ENCODE measurements at regions of chr11 and their contacts with region 1.

Region 1: DNA sequence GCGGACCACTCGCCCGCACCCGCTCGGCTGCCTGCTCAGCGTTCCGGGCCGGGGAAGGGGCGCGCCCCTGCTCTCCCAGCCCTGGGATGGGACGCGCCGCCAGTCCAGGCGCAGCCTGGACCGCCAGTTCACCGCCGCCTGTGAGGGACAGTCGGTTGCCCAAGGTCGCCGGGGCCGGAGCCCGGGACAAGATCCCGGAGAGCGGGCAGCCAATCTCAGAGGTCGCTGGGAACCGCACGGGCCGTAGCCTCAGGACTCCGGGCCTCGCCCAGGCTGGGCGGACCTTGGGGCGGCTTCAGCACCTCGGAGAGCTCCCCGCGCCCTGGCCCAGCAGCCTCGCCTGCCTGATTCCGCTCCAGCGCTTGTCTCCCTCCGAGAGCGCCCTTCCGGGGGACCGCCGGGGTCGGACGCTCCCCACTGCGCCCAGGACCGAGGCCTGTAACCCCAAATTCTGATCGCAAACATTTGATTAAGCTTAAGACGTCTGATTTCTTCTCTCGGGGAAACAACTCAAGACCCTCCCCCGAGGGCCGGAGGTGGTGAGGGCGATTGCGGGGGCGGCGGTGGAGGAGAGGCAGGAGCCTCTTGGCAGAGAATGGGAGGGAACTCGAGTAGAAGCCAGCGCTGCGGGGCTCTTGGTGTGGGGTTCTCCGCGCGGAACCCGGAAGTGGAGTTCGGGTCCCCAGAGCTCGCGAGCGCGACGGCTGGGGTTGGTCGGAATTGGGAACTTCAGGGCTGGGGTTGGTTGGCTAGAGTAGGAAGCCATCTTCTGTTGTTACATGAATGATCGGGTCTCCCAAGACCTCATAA is 1.1 kb upstream of the CHRM4 start:
- DNase-seq: peak; percentile 74
- ATAC-seq: peak; percentile 90
- H3K4me3 Mint-ChIP-seq: peak overlapping the region; percentile 70
- H3K27ac Mint-ChIP-seq: peak overlapping the region; percentile 35
- H3K4me1 Mint-ChIP-seq: peaks cover 24% of the 10 kb centered on the region
- H3K27me3 Mint-ChIP-seq: peaks cover 25% of the 10 kb centered on the region
- CTCF ChIP-seq: no peak

Region 2: DNA sequence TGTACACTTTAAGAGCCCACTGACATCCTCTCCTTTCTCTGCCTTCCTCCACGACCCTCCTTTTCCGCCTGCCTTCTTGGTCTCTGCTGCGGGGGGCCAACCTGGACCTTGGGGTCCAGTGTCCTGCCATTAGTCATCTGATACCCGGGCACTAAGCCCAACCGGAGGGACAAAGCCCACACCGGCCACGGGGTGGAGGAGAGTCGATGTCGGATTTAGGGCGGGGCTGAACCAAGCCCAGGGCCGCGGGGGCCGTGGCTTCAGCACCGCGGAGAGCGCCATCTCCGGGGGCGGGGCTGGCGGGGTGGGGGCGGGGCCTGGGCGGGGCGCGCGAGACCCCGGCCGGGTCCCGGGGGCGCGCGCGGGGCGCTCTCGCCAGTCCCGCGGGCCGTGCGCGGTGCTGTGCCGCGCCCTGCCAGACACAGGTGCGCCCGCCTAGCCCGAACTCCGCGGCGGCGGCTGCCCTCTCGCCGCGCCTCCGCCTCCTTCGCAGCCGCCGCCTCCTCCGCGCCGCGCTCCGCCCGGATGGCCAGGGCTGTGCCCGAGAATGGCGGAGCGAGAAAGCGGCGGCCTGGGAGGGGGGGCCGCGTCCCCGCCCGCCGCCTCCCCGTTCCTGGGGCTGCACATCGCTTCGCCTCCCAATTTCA is 507.2 kb before region 1 on chr11 and contains the start of gene MAPK8IP1:
- CTCF ChIA-PET with region 1: no interaction called
- POLR2A ChIA-PET with region 1: no interaction called
- intact Hi-C with region 1: loop called (anchors 2 kb)
- DNase-seq: peak; percentile 61
- ATAC-seq: peak; percentile 88
- H3K4me3 Mint-ChIP-seq: peak within 1 kb of the TSS; percentile 80
- H3K27ac Mint-ChIP-seq: no peak within 1 kb of the TSS
- H3K4me1 Mint-ChIP-seq: peaks cover 10% of the 10 kb centered on the region
- H3K27me3 Mint-ChIP-seq: no peaks in the 10 kb centered on the region
- CTCF ChIP-seq: no peak
- total RNA-seq, gene MAPK8IP1: 1.9 and 3.4 TPM in 2 replicates

Region 3: DNA sequence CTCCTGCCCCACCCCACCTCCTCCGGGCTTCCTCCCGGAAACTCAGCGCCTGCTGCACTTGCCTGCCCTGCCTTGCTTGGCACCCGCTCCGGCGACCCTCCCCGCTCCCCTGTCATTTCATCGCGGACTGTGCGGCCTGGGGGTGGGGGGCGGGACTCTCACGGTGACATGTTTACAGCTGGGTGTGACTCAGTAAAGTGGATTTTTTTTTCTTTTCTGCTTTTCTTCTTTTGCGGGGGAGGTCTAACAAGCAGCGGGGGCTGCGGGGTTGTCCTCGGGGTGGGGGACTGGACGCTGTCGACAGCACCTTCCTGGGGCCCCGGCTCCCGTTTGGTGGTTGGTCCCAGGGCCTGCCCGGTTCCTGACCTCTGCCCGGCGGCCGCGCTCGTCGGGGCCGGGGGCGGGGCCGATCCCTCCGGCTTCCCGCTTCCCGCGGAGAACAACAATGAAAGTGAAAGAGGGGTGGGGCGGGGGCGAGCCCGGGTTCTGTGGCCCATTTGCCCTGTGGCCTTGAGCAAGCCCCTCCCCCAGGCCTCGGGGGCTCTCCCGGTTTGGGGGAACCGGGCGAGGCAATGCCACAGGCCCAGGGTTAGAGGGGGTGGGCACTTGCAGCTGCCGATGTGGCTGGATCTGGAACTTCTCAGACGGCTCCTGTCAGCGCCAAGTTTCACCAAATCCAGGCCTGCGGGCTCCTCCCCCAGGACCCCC is 12.1 kb before region 1 on chr11:
- CTCF ChIA-PET with region 1: no interaction called
- POLR2A ChIA-PET with region 1: no interaction called
- intact Hi-C with region 1: loop called (anchors 1 kb)
- DNase-seq: no peak
- ATAC-seq: peak; percentile 44
- H3K4me3 Mint-ChIP-seq: peak overlapping the region; percentile 80
- H3K27ac Mint-ChIP-seq: no peak overlapping the region
- H3K4me1 Mint-ChIP-seq: peaks cover 8% of the 10 kb centered on the region
- H3K27me3 Mint-ChIP-seq: peaks cover 24% of the 10 kb centered on the region
- CTCF ChIP-seq: no peak

Region 4: GRCh38 chr11:46529095-46529905 is 136.7 kb after region 1 on chr11:
- CTCF ChIA-PET with region 1: interaction called, 3 read pairs
- POLR2A ChIA-PET with region 1: no interaction called
- intact Hi-C with region 1: loop called (anchors 1 kb)
- DNase-seq: peak; percentile 41
- ATAC-seq: peak; percentile 99
- H3K4me3 Mint-ChIP-seq: no peak overlapping the region
- H3K27ac Mint-ChIP-seq: no peak overlapping the region
- H3K4me1 Mint-ChIP-seq: peaks cover 22% of the 10 kb centered on the region
- H3K27me3 Mint-ChIP-seq: no peaks in the 10 kb centered on the region
- CTCF ChIP-seq: no peak

Region 5: GRCh38 chr11:46537537-46538295 is 145.1 kb after region 1 on chr11:
- CTCF ChIA-PET with region 1: no interaction called
- POLR2A ChIA-PET with region 1: no interaction called
- intact Hi-C with region 1: loop called (anchors 1 kb)
- DNase-seq: no peak
- ATAC-seq: peak; percentile 68
- H3K4me3 Mint-ChIP-seq: no peak overlapping the region
- H3K27ac Mint-ChIP-seq: no peak overlapping the region
- H3K4me1 Mint-ChIP-seq: peaks cover 13% of the 10 kb centered on the region
- H3K27me3 Mint-ChIP-seq: no peaks in the 10 kb centered on the region
- CTCF ChIP-seq: no peak

Region 6: GRCh38 chr11:46593550-46594373 is 201.1 kb after region 1 on chr11 and contains the start of gene AMBRA1:
- CTCF ChIA-PET with region 1: no interaction called
- POLR2A ChIA-PET with region 1: no interaction called
- intact Hi-C with region 1: no loop called
- DNase-seq: peak; percentile 77
- ATAC-seq: peak; percentile 93
- H3K4me3 Mint-ChIP-seq: peak within 1 kb of the TSS; percentile 97
- H3K27ac Mint-ChIP-seq: peak within 1 kb of the TSS; percentile 88
- H3K4me1 Mint-ChIP-seq: peaks cover 43% of the 10 kb centered on the region
- H3K27me3 Mint-ChIP-seq: no peaks in the 10 kb centered on the region
- CTCF ChIP-seq: no peak
- total RNA-seq, gene AMBRA1: 35.5 and 39.1 TPM in 2 replicates

Region 7: GRCh38 chr11:47161134-47161854 is 768.7 kb after region 1 on chr11:
- CTCF ChIA-PET with region 1: no interaction called
- POLR2A ChIA-PET with region 1: no interaction called
- intact Hi-C with region 1: loop called (anchors 5 kb)
- DNase-seq: peak; percentile 47
- ATAC-seq: peak; percentile 84
- H3K4me3 Mint-ChIP-seq: no peak overlapping the region
- H3K27ac Mint-ChIP-seq: no peak overlapping the region
- H3K4me1 Mint-ChIP-seq: no peaks in the 10 kb centered on the region
- H3K27me3 Mint-ChIP-seq: no peaks in the 10 kb centered on the region
- CTCF ChIP-seq: peak; percentile 46

Measured in activated B cell treated with CpG ODN at 0.5 μM for 24 hours (primary cell).